ENCODE measurements at regions of chr14 and their contacts with region 1.

Region 1: DNA sequence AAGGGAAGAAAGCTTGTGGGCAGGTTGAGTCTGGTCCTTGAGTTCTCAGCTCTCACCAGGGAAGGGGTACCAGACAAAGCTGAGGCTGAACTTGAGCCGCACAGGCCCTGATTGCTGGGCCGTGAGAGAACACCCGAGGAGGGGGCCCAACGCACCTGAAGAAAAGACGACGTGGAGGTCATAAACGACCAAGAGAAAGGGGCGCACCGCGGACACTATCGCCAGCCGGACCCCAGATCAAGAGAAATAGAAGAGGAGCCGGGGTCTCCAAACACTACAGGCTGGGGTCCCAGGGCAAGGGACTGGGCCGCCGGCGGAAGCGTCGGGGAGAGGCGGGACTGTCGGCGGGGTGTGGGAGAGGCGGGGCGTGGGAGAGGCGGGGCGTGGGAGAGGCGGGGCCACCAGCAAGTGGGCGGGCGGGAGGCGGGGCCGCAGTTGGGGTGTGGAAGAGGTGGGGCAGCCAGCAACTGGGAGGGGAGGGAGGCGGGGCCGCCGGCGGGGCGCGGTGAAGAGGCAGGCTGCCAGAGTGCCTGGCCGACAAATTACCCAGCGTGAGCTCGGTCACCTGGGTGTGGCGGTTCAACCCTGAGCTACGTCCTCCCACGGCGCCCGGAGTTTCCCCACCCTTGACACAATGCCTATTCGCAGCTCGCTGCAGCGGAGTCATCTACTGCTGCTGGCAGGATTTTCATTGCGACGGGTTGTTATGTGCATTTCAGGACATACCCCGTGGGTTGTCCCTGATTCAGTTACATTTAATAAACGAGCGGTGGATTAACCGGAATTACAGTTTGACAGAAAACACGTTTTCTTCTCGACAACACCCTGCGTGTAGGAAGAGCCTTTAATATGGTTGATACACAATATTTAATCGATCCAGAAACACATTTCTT is 15.5 kb upstream of the NEMF start:
- DNase-seq: peak; percentile 98 to 99 (median 99)
- ATAC-seq: peak; percentile 98
- H3K4me3 ChIP-seq: peak overlapping the region; percentile 13
- H3K4me1 ChIP-seq: peaks cover 11% of the 10 kb centered on the region
- CTCF ChIP-seq: no peak

Region 2: DNA sequence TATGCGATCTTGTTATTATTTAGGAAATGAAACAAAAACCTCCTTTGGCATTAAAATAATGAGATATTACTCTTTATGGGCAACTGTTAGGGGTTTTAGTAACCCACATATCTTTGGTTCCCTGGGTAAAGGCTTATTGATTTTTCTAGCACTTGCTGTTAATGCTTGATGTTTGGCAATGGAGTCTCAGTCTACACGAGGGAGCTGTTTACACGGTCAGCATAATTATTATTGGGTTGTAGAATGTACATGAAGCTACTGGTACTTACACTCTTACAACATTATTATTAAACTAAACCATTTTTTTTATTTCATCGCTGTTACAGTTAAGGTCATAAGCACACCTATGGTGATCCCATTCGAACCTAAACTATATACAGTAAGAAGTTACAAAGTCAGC is 294.0 kb before region 1 on chr14:
- intact Hi-C with region 1: no loop called
- DNase-seq: no peak
- ATAC-seq: no peak
- H3K4me3 ChIP-seq: no peak overlapping the region
- H3K4me1 ChIP-seq: no peaks in the 10 kb centered on the region
- CTCF ChIP-seq: no peak

Region 3: GRCh38 chr14:50045039-50045711 is 177.1 kb after region 1 on chr14:
- intact Hi-C with region 1: loop called in 1 of 2 experiments (anchors 10 kb)
- DNase-seq: peak; percentile 90 to 96 (median 90)
- ATAC-seq: peak; percentile 88
- H3K4me3 ChIP-seq: no peak overlapping the region
- H3K4me1 ChIP-seq: peaks cover 45% of the 10 kb centered on the region
- CTCF ChIP-seq: no peak

Region 4: DNA sequence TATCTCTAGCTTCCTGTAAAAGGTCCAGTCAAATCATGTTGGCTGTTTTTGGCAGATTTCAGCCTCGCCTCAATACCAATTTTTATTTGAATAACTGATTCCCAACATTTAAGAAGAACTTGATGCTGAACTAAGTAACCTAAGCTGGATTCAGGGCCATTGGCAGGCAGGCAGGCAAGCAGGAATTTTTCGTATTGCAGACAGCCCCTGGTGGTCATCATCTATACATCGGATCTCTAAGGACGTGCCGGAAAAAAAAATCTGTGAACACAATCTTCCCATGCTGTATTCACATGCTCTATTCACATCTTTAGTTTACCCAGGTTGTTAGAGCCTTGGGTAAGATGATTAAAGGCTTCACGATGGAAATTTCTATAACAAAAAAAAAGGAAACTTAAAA is 241.3 kb after region 1 on chr14:
- intact Hi-C with region 1: loop called (anchors 5 kb)
- DNase-seq: no peak
- ATAC-seq: no peak
- H3K4me3 ChIP-seq: no peak overlapping the region
- H3K4me1 ChIP-seq: no peaks in the 10 kb centered on the region
- CTCF ChIP-seq: no peak

Region 5: DNA sequence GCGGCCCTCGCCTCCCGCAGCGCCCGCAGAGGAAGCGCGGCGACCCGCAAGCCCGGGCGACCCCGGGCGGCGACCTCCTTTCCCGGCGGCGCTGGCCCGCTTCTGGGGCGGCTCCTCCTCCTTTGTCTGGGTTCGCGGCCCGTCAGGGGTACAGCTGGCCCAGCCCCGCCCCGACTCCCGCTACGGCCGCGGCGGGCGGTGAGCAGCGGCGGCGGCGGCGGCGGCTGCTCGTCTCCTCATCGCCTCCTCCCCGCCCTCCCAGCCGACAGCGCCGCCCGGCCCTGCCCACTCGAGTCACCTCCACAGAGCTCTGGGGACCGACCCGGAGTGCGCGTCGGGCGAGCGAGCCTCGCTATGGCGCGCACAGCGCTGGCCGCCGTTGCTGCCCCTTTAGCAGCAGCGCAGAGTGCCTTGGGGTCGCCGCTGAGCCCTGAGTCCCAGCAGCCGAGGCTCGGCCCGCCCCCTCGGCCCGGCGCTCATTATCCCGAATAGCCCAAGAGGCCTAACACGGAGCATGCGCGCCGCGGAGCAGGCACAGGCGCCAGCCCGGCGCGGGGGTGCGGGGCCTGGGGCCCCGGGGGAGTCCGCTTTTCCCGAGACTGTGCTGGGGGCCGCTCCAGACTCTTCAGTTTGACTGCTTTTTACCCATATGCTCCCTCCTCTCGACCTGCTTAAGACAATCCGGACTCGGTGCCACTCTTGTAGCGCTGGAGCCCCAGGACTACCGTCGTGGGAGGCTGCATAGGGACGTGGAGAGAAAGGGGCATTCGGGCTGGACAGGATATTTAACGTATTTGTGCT is 363.6 kb after region 1 on chr14 and contains the start of gene SOS2:
- intact Hi-C with region 1: loop called in 1 of 2 experiments (anchors 10 kb)
- DNase-seq: peak; percentile 87 to 92 (median 92)
- ATAC-seq: peak; percentile 96
- H3K4me3 ChIP-seq: peak within 1 kb of the TSS; percentile 75
- H3K4me1 ChIP-seq: peaks cover 21% of the 10 kb centered on the region
- CTCF ChIP-seq: no peak
- total RNA-seq, gene SOS2: 38.0 to 60.2 (median 44.4) TPM

Measured in mucosa of descending colon (tissue), 3 donors.